Mammary epithelial cell (primary cell): ENCODE measurements at regions of chr5 and their contacts with region 1.

Region 1: GRCh38 chr5:115098041-115098702 is 71.5 kb downstream of the TRIM36 start:
- DNase-seq: peak; percentile 45
- H3K4me3 ChIP-seq: no peak overlapping the region
- H3K27ac ChIP-seq: no peak overlapping the region
- H3K4me1 ChIP-seq: peaks cover 3% of the 10 kb centered on the region
- H3K27me3 ChIP-seq: no peaks in the 10 kb centered on the region
- CTCF ChIP-seq: peak; percentile 78 to 80

Region 2: GRCh38 chr5:115169487-115170133 is 71.4 kb after region 1 on chr5 and contains the start of gene TRIM36:
- CTCF ChIA-PET with region 1: no interaction called
- dilution Hi-C with region 1: no loop called
- in situ Hi-C with region 1: no loop called
- intact Hi-C with region 1: loop called (anchors 1 kb)
- DNase-seq: peak; percentile 93
- H3K4me3 ChIP-seq: peak within 1 kb of the TSS; percentile 83 to 99 (median 97)
- H3K27ac ChIP-seq: peak within 1 kb of the TSS; percentile 68
- H3K4me1 ChIP-seq: peaks cover 17% of the 10 kb centered on the region
- H3K27me3 ChIP-seq: peaks cover 5% of the 10 kb centered on the region
- CTCF ChIP-seq: peak in 1 of 2 donors; percentile 48
- total RNA-seq, gene TRIM36: 2.8 to 6.1 TPM

Region 3: GRCh38 chr5:115246361-115246991 is 148.3 kb after region 1 on chr5:
- CTCF ChIA-PET with region 1: interaction called, 4 read pairs
- dilution Hi-C with region 1: no loop called
- in situ Hi-C with region 1: loop called (anchors 10 to 25 kb)
- intact Hi-C with region 1: loop called (anchors 1 kb)
- DNase-seq: peak; percentile 26
- H3K4me3 ChIP-seq: no peak overlapping the region
- H3K27ac ChIP-seq: no peak overlapping the region
- H3K4me1 ChIP-seq: peaks cover 7% of the 10 kb centered on the region
- H3K27me3 ChIP-seq: no peaks in the 10 kb centered on the region
- CTCF ChIP-seq: peak; percentile 62 to 70

Region 4: GRCh38 chr5:115296124-115297022 is 198.2 kb after region 1 on chr5 and contains the start of gene CCDC112:
- CTCF ChIA-PET with region 1: no interaction called
- dilution Hi-C with region 1: no loop called
- in situ Hi-C with region 1: no loop called
- intact Hi-C with region 1: loop called (anchors 2 kb)
- DNase-seq: peak; percentile 73
- H3K4me3 ChIP-seq: peak within 1 kb of the TSS; percentile 57 to 98 (median 81)
- H3K27ac ChIP-seq: peak within 1 kb of the TSS; percentile 40
- H3K4me1 ChIP-seq: peaks cover 5% of the 10 kb centered on the region
- H3K27me3 ChIP-seq: no peaks in the 10 kb centered on the region
- CTCF ChIP-seq: no peak
- total RNA-seq, gene CCDC112: 3.9 to 4.3 TPM

Region 5: GRCh38 chr5:115586601-115587048 is 488.5 kb after region 1 on chr5:
- CTCF ChIA-PET with region 1: interaction called, 5 read pairs
- dilution Hi-C with region 1: no loop called
- in situ Hi-C with region 1: no loop called
- intact Hi-C with region 1: loop called (anchors 5 kb)
- DNase-seq: no peak
- H3K4me3 ChIP-seq: no peak overlapping the region
- H3K27ac ChIP-seq: no peak overlapping the region
- H3K4me1 ChIP-seq: peaks cover 10% of the 10 kb centered on the region
- H3K27me3 ChIP-seq: no peaks in the 10 kb centered on the region
- CTCF ChIP-seq: peak; percentile 44 to 52

Region 6: GRCh38 chr5:116068028-116068632 is 970.0 kb after region 1 on chr5:
- CTCF ChIA-PET with region 1: no interaction called
- dilution Hi-C with region 1: no loop called
- in situ Hi-C with region 1: no loop called
- intact Hi-C with region 1: loop called (anchors 10 kb)
- DNase-seq: peak; percentile 14
- H3K4me3 ChIP-seq: no peak overlapping the region
- H3K27ac ChIP-seq: no peak overlapping the region
- H3K4me1 ChIP-seq: no peaks in the 10 kb centered on the region
- H3K27me3 ChIP-seq: peaks cover 3% of the 10 kb centered on the region
- CTCF ChIP-seq: peak; percentile 71 to 77